Endothelial cell of umbilical vein (primary cell): ENCODE measurements at regions of chr5 and their contacts with region 1.

Region 1: GRCh38 chr5:10307206-10308148 is at the start of gene CMBL:
- DNase-seq: peak; percentile 65
- H3K4me3 ChIP-seq: peak within 1 kb of the TSS; percentile 72 to 83 (median 74)
- H3K27ac ChIP-seq: no peak within 1 kb of the TSS
- H3K4me1 ChIP-seq: peaks cover 2% of the 10 kb centered on the region
- H3K27me3 ChIP-seq: no peaks in the 10 kb centered on the region
- CTCF ChIP-seq: no peak
- POLR2A ChIP-seq: peak; percentile 35
- total RNA-seq, gene CMBL: 14.3 and 15.9 TPM in 2 replicates

Region 2: GRCh38 chr5:10295619-10296326 is 11.7 kb before region 1 on chr5:
- CTCF ChIA-PET with region 1: no interaction called
- POLR2A ChIA-PET with region 1: no interaction called
- dilution Hi-C with region 1: no loop called
- intact Hi-C with region 1: loop called (anchors 1 kb)
- DNase-seq: peak; percentile 44
- H3K4me3 ChIP-seq: no peak overlapping the region
- H3K27ac ChIP-seq: peak overlapping the region; percentile 5
- H3K4me1 ChIP-seq: peaks cover 4% of the 10 kb centered on the region
- H3K27me3 ChIP-seq: no peaks in the 10 kb centered on the region
- CTCF ChIP-seq: no peak
- POLR2A ChIP-seq: no peak

Region 3: DNA sequence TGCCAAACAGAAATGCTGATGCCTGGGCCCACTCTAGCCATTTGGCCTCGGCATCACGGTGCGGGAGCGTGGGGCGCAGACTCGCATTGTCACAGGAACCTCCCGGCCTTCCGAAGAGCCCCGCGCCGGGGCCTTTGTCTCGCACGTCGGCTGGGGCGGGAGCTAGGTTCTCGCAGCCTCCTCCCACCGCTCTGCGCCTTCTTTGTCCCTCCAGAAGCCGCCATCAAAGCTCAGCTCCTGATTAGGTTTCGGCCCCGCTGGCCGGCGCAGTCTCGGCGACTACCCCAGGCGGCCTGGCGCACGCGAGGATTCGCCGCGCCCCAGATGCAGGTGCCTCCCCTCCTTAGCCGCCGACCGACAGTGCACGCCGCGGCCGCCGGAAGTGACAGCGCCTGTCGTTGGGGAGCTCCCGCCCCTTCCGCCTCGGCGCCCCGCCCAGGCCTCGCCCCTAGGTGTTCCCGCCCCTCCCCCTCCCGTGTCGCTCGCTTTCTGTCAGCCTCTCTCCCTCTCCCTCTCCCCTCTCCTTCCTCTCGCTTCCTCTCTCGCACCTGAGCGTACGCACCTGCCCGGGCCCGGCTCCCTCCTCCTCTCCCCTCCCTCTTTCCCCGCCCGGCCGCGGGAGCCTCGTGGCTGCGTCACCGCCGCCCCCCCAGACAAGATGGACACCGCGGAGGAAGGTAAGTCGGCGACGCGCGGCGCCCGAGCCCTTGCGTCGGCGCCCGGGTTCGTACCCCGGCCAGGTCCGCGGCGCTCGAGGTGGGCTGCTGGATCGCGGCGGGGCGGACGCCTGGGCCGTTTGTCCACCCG is 46.0 kb after region 1 on chr5 and contains the start of gene MARCHF6:
- CTCF ChIA-PET with region 1: interaction called, 3 read pairs
- POLR2A ChIA-PET with region 1: no interaction called
- dilution Hi-C with region 1: no loop called
- intact Hi-C with region 1: loop called (anchors 2 kb)
- DNase-seq: peak; percentile 89
- H3K4me3 ChIP-seq: peak within 1 kb of the TSS; percentile 47 to 94 (median 72)
- H3K27ac ChIP-seq: peak within 1 kb of the TSS; percentile 85
- H3K4me1 ChIP-seq: peaks cover 17% of the 10 kb centered on the region
- H3K27me3 ChIP-seq: no peaks in the 10 kb centered on the region
- CTCF ChIP-seq: no peak
- POLR2A ChIP-seq: peak; percentile 97
- total RNA-seq, gene MARCHF6: 105 and 108 TPM in 2 replicates

Region 4: GRCh38 chr5:10366310-10367297 is 59.1 kb after region 1 on chr5:
- CTCF ChIA-PET with region 1: no interaction called
- POLR2A ChIA-PET with region 1: no interaction called
- dilution Hi-C with region 1: no loop called
- intact Hi-C with region 1: no loop called
- DNase-seq: no peak
- H3K4me3 ChIP-seq: no peak overlapping the region
- H3K27ac ChIP-seq: no peak overlapping the region
- H3K4me1 ChIP-seq: no peaks in the 10 kb centered on the region
- H3K27me3 ChIP-seq: no peaks in the 10 kb centered on the region
- CTCF ChIP-seq: no peak
- POLR2A ChIP-seq: no peak

Region 5: GRCh38 chr5:10432059-10433008 is 124.9 kb after region 1 on chr5:
- CTCF ChIA-PET with region 1: no interaction called
- POLR2A ChIA-PET with region 1: interaction called, 14 read pairs
- dilution Hi-C with region 1: no loop called
- intact Hi-C with region 1: no loop called
- DNase-seq: no peak
- H3K4me3 ChIP-seq: no peak overlapping the region
- H3K27ac ChIP-seq: no peak overlapping the region
- H3K4me1 ChIP-seq: no peaks in the 10 kb centered on the region
- H3K27me3 ChIP-seq: no peaks in the 10 kb centered on the region
- CTCF ChIP-seq: no peak
- POLR2A ChIP-seq: no peak